Activated T-helper 1 cell treated with anti-CD3 and anti-CD28 coated beads, Interleukin-12 subunit alpha, Interleukin-12 subunit beta, Interleukin-2, Interleukin-4 antibody, amounts not matched to agents 30 ng/mL and 10 ng/mL and 1 ng/mL, durations not matched to agents 14 hours and 24 hours and 36 hours (primary cell): ENCODE measurements at regions of chr7 and their contacts with region 1.

Region 1: DNA sequence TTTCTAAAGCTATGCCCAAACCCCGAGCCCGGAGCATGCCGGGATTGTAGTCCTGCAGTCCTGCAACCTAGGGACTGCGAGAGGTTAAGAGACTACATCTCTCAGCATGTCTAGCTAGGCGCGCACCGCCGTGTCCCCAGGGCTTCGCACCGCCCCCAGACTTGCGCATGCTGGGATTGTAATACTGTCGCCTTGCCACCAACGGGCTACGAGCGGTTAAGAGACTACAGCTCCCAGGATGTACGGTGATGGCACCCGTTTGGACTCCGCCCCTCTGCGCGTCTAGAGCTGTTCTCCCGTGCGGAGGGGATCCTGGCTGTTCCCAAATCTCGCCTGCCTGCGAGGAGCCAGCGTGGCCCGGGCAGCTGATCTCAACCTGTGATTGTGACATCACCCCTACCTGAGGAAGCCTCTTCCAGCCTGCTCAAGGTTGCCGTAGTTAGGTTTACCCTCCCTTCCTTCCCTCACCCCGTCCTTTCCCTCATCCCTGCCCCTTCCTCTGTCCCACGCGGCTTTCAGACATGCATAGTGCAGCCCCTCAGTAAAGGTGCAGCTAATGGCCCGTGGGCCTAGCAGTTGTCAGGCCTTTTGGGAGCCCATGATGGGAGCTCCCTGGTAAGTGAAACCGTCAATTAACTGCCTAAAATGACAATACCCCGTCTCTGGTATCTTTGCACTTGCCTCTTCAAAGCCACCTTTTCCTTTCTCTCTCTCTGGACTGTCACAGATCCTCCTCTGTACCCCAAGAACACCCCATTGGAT is 6.3 kb upstream of the ZNF736 start:
- DNase-seq: peak; percentile 91
- H3K4me3 Mint-ChIP-seq: peak overlapping the region; percentile 89
- H3K27ac Mint-ChIP-seq: peak overlapping the region; percentile 88
- H3K4me1 Mint-ChIP-seq: peaks cover 17% of the 10 kb centered on the region
- H3K27me3 Mint-ChIP-seq: no peaks in the 10 kb centered on the region

Region 2: DNA sequence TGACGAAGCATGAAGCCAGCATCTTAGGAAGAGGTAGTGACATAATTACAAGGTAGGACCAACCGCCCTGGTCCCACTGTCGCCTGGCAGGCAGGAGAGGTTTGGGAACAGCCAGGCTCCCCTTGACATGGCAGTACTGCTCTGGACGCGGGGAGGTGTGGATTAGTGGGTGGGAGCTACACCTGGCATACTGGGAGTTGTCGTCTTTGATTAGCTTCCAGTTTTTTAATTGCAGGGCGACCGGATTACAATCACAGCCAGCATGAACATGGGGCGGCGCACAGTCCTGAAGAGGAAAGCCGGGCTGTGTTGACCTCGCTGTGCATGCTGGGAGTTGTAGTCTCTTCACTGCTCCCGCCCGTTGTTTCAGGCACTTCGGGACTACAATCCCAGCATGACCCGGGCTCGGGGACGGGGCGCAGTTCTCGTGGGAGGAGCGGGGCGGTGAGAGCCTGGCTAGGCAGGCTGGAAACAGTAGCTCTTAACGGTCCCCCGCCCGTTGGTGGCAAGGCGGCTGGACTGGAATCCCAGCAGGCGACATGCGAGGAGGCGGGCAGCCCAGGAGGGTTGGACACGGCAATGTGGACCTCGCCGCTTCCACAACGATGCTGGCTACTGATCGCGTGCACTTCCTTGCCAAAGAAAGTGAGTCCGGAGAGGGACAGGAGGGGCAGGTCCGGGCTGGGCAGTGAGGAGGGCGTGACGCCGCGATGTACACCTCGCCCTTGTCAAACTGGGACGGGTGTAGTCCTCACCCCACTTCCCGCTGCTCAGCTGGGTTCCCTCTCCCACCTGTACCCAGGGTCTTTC is 406.8 kb before region 1 on chr7:
- intact Hi-C with region 1: loop called (anchors 1 kb)
- DNase-seq: peak; percentile 62
- H3K4me3 Mint-ChIP-seq: peak overlapping the region; percentile 87
- H3K27ac Mint-ChIP-seq: peak overlapping the region; percentile 67
- H3K4me1 Mint-ChIP-seq: no peaks in the 10 kb centered on the region
- H3K27me3 Mint-ChIP-seq: no peaks in the 10 kb centered on the region

Region 3: GRCh38 chr7:64515330-64515729 is 207.9 kb after region 1 on chr7:
- intact Hi-C with region 1: loop called (anchors 5 kb)
- DNase-seq: no peak
- H3K4me3 Mint-ChIP-seq: no peak overlapping the region
- H3K27ac Mint-ChIP-seq: no peak overlapping the region
- H3K4me1 Mint-ChIP-seq: no peaks in the 10 kb centered on the region
- H3K27me3 Mint-ChIP-seq: no peaks in the 10 kb centered on the region

Region 4: DNA sequence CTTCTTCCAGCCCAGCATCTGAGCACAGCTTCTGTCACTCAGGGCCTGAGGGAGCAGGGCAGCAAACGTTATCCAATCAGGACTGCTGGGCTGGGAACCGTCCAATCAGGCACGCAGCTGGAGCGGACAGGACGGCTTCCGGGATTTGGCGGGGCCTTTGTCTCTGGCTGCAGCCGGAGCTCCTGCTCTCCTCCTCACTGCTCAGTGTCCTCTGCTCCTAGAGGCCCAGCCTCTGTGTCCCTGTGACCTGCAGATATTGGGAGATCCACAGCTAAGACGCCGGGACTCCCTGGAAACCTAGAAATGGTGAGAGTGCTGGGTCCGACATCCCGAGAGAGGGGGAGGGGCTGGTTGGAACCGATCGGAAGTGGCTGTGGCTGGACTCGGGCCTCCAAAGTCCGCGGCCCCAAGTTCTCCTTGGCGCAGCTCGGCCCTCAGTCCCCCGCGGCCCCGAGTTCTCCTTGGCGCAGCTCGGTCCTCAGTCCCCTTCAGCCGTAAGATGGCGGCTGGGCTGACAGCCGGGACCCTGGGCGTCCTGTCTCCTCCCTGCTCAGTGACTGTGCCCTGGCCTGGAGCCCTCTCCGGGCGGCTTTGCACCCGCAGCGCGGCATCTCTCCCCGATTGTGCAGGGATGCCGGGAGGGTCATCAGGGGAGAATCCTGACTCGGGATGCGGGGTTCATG is 358.7 kb after region 1 on chr7 and contains the start of gene ZNF107:
- intact Hi-C with region 1: loop called (anchors 1 kb)
- DNase-seq: peak; percentile 83
- H3K4me3 Mint-ChIP-seq: peak within 1 kb of the TSS; percentile 96
- H3K27ac Mint-ChIP-seq: peak within 1 kb of the TSS; percentile 89
- H3K4me1 Mint-ChIP-seq: peaks cover 16% of the 10 kb centered on the region
- H3K27me3 Mint-ChIP-seq: no peaks in the 10 kb centered on the region
- total RNA-seq, gene ZNF107: 12.6 and 13.5 TPM in 2 replicates

Region 5: GRCh38 chr7:65037740-65038678 is 730.6 kb after region 1 on chr7:
- intact Hi-C with region 1: loop called (anchors 2 kb)
- DNase-seq: peak; percentile 83
- H3K4me3 Mint-ChIP-seq: peak overlapping the region; percentile 79
- H3K27ac Mint-ChIP-seq: peak overlapping the region; percentile 73
- H3K4me1 Mint-ChIP-seq: peaks cover 16% of the 10 kb centered on the region
- H3K27me3 Mint-ChIP-seq: no peaks in the 10 kb centered on the region

Region 6: GRCh38 chr7:65750511-65751344 is 1443.3 kb after region 1 on chr7:
- intact Hi-C with region 1: no loop called
- DNase-seq: peak; percentile 89
- H3K4me3 Mint-ChIP-seq: peak overlapping the region; percentile 100
- H3K27ac Mint-ChIP-seq: peak overlapping the region; percentile 97
- H3K4me1 Mint-ChIP-seq: peaks cover 11% of the 10 kb centered on the region
- H3K27me3 Mint-ChIP-seq: no peaks in the 10 kb centered on the region